ENCODE measurements at regions of chr3 and their contacts with region 1.

Region 1: DNA sequence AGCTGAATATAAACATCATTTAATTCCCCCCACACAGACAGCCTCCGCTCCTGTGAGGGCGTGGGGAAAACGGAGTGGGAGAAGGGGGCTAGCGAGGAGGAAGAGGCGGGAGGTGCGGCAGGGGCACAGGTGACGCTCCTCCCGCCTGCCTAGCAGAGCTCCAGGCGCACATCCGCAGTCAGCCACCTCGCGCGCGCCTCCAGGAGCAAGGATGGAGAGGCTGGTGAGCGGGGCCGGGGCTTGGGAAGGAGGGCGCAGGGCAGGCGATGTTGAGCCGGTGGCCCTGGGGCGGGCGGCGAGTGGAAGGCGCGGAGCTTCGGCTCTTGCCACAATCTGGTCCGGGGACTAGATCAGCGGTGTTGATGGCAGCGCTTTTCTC is at the start of gene CD200:
- DNase-seq: peak in 13 of 14 experiments; percentile 19 to 70 (median 36)
- ATAC-seq: peak; percentile 77
- H3K4me3 ChIP-seq: peak within 1 kb of the TSS; percentile 78
- H3K4me3 Mint-ChIP-seq: peak within 1 kb of the TSS; percentile 94
- H3K27ac ChIP-seq: peak within 1 kb of the TSS in 1 of 2 donors; percentile 40
- H3K27ac Mint-ChIP-seq: peak within 1 kb of the TSS; percentile 73
- H3K4me1 ChIP-seq: peaks cover 13% of the 10 kb centered on the region
- H3K4me1 Mint-ChIP-seq: peaks cover 44% of the 10 kb centered on the region
- H3K27me3 ChIP-seq: no peaks in the 10 kb centered on the region
- H3K27me3 Mint-ChIP-seq: no peaks in the 10 kb centered on the region
- CTCF ChIP-seq: no peak
- total RNA-seq, gene CD200: 5.2 to 6.9 TPM

Region 2: GRCh38 chr3:112175646-112176045 is 157.3 kb before region 1 on chr3:
- CTCF ChIA-PET with region 1: no interaction called
- POLR2A ChIA-PET with region 1: no interaction called
- intact Hi-C with region 1: no loop called
- DNase-seq: no peak
- ATAC-seq: no peak
- H3K4me3 ChIP-seq: no peak overlapping the region
- H3K4me3 Mint-ChIP-seq: no peak overlapping the region
- H3K27ac ChIP-seq: no peak overlapping the region
- H3K27ac Mint-ChIP-seq: no peak overlapping the region
- H3K4me1 ChIP-seq: no peaks in the 10 kb centered on the region
- H3K4me1 Mint-ChIP-seq: no peaks in the 10 kb centered on the region
- H3K27me3 ChIP-seq: no peaks in the 10 kb centered on the region
- H3K27me3 Mint-ChIP-seq: no peaks in the 10 kb centered on the region
- CTCF ChIP-seq: no peak

Region 3: DNA sequence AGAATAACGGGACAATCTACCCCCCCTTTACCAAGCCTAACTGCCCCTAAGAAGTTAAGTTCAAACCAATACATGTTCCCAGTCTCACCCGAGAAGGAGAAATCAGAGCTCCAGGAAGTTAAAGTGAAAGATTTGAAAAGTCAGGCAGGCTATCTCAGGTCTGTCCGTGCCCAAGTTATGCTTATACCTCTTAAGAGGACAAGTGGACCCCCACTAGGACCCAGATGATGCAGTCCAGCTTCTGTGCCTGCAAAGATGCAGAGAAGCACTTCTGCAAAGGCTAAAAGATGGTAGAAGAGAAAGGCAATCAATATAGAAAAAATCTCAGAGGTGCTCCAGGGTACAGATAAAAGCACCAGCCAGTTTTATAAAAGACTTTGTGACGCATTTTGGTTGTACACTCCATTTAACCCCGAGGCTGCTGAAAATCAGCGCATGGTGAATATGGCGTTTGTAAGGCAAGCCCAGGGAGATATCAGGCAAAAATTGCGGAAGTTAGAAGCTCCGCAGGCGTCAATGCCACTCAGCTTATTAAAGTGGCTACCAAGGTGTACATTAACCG is 29.1 kb before region 1 on chr3:
- CTCF ChIA-PET with region 1: interaction called, 3 read pairs
- POLR2A ChIA-PET with region 1: interaction called, 12 read pairs
- intact Hi-C with region 1: no loop called
- DNase-seq: peak in 8 of 14 experiments; percentile 8 to 52 (median 23)
- ATAC-seq: peak; percentile 83
- H3K4me3 ChIP-seq: peak overlapping the region; percentile 60
- H3K4me3 Mint-ChIP-seq: no peak overlapping the region
- H3K27ac ChIP-seq: no peak overlapping the region
- H3K27ac Mint-ChIP-seq: no peak overlapping the region
- H3K4me1 ChIP-seq: peaks cover 22% of the 10 kb centered on the region
- H3K4me1 Mint-ChIP-seq: peaks cover 1% of the 10 kb centered on the region
- H3K27me3 ChIP-seq: no peaks in the 10 kb centered on the region
- H3K27me3 Mint-ChIP-seq: no peaks in the 10 kb centered on the region
- CTCF ChIP-seq: no peak

Region 4: DNA sequence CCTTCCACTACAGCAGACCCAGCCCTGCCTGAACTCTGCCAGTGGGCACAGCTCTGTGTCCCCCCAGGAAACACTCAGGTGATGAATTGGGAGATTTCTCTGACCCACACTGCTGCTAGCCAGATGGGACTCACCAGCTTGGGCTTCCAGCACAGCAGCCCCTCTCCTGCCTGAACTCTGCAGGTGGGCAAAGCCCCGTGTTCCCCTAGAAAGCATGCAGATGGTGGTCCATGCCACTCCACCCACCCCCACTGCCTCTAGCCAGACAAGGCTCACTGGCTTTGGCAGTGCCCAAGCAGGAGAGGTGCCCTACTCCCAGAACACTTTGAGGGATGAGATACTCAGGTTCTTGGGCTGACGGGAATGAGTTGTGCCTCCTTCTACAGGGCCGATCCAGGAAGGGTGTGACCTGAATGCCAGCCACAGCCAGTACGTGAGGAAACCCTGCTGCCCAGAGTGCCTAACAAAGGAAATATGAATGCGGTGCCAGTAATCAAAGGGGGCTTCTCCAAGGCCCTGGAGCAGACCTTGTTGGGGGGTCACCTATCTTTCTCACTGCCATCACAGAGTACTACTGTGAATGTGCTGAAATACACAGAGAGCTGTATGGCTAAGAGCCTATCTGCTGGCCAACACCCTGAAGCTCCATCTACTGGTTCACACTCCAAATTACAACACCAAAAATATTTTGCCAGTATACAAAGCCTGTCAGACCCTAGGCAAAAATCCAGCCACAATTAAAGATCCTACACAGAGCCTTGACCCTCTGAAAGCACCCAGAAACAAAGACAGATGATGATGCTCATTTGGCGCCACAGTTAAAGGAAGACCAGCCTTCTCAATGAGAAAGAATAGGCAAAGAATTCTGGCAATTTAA is 104.4 kb after region 1 on chr3:
- CTCF ChIA-PET with region 1: no interaction called
- POLR2A ChIA-PET with region 1: interaction called, 6 read pairs
- intact Hi-C with region 1: loop called in 1 of 2 experiments (anchors 10 kb)
- DNase-seq: peak in 3 of 14 experiments; percentile 49 to 56 (median 55)
- ATAC-seq: peak; percentile 72
- H3K4me3 ChIP-seq: no peak overlapping the region
- H3K4me3 Mint-ChIP-seq: peak overlapping the region; percentile 50
- H3K27ac ChIP-seq: no peak overlapping the region
- H3K27ac Mint-ChIP-seq: no peak overlapping the region
- H3K4me1 ChIP-seq: peaks cover 10% of the 10 kb centered on the region
- H3K4me1 Mint-ChIP-seq: peaks cover 17% of the 10 kb centered on the region
- H3K27me3 ChIP-seq: no peaks in the 10 kb centered on the region
- H3K27me3 Mint-ChIP-seq: no peaks in the 10 kb centered on the region
- CTCF ChIP-seq: peak; percentile 42

Region 5: GRCh38 chr3:112464264-112464663 is 131.3 kb after region 1 on chr3:
- CTCF ChIA-PET with region 1: interaction called, 3 read pairs
- POLR2A ChIA-PET with region 1: interaction called, 11 read pairs
- intact Hi-C with region 1: no loop called
- DNase-seq: peak in 3 of 14 experiments; percentile 53 to 79 (median 57)
- ATAC-seq: peak; percentile 82
- H3K4me3 ChIP-seq: no peak overlapping the region
- H3K4me3 Mint-ChIP-seq: peak overlapping the region; percentile 60
- H3K27ac ChIP-seq: peak overlapping the region; percentile 47 to 55
- H3K27ac Mint-ChIP-seq: peak overlapping the region; percentile 72
- H3K4me1 ChIP-seq: peaks cover 25% of the 10 kb centered on the region
- H3K4me1 Mint-ChIP-seq: peaks cover 88% of the 10 kb centered on the region
- H3K27me3 ChIP-seq: no peaks in the 10 kb centered on the region
- H3K27me3 Mint-ChIP-seq: no peaks in the 10 kb centered on the region
- CTCF ChIP-seq: no peak

Region 6: DNA sequence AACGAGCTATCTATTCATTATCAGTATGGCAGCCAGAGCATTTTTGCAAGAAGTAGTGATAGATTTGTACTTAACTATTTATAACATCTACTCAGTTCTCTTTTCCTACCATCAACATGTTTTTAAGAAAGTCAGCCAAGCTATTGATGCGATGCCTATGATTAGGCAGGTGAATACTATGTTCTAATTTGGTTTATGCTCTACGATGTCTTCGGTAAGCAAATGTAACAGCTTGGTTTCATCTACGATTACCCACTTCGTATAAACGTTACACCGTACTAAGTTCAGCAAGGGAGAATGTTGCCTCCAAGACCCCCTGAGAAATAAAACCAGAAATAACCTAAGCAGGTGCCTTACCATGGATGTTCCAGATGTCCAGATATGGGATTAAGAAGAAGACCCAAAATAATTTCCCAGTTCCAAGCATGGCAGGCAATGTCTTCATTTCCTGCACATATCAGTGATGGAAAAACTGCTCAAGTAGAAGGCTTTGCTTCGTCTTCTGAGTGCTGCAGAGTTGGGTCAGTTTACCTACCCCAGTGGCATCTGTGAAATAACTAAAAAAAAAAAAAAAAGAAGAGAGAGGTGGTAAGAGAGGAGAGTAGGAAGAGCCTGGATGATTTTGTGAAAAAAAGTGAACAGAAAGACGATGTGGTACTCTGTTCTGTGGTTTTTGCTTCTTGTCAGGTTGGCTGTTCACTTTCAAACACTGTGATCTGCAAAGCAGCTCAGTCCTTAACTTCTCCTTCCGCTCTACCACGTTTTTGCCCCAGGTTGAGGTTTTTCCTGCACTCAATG is 166.1 kb after region 1 on chr3 and contains the start of gene BTLA:
- CTCF ChIA-PET with region 1: no interaction called
- POLR2A ChIA-PET with region 1: interaction called, 38 read pairs
- intact Hi-C with region 1: no loop called
- DNase-seq: peak in 6 of 14 experiments; percentile 7 to 69 (median 59)
- ATAC-seq: peak; percentile 71
- H3K4me3 ChIP-seq: peak within 1 kb of the TSS; percentile 66
- H3K4me3 Mint-ChIP-seq: peak within 1 kb of the TSS; percentile 90
- H3K27ac ChIP-seq: peak within 1 kb of the TSS; percentile 57 to 60
- H3K27ac Mint-ChIP-seq: peak within 1 kb of the TSS; percentile 90
- H3K4me1 ChIP-seq: peaks cover 10% of the 10 kb centered on the region
- H3K4me1 Mint-ChIP-seq: peaks cover 69% of the 10 kb centered on the region
- H3K27me3 ChIP-seq: no peaks in the 10 kb centered on the region
- H3K27me3 Mint-ChIP-seq: no peaks in the 10 kb centered on the region
- CTCF ChIP-seq: no peak
- total RNA-seq, gene BTLA: 8.5 to 9.6 TPM

Measured in CD4-positive, alpha-beta T cell (primary cell).